ENCODE measurements at regions of chr15 and their contacts with region 1.

Region 1: DNA sequence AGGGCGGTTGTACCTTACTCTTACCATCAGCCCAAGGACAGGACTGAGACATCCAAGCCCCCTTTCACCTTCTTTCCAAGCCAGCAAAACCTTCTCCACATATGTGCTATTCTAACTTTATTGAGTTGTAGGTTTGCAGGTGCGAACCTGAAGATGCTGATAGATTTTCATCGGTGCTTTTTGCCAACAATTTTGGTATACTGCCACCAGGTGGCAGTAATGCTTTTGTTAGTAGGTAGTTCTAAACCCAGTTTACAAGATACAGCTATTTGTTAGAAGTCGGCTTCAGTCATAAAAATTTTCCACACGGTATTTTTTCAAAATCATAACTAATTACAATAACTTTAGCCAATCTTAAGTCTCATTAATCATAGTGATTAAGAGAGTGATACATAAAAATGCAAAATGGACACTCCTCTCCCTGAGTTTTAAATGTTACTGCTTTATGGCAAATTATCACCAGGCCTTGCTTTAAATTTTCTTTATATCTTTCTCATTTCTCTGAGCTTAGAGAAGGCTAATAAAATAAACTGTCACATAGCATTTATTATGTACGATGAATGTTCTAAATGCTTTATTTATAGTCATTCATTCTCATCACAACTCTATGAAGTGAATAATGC is 636 bp downstream of the TBC1D21 start:
- DNase-seq: peak; percentile 17
- H3K4me3 ChIP-seq: no peak overlapping the region
- CTCF ChIP-seq: peak; percentile 23

Region 2: GRCh38 chr15:73851689-73852088 is 22.3 kb before region 1 on chr15:
- CTCF ChIA-PET with region 1: interaction called, 10 read pairs
- POLR2A ChIA-PET with region 1: no interaction called
- DNase-seq: no peak
- H3K4me3 ChIP-seq: no peak overlapping the region
- CTCF ChIP-seq: no peak

Region 3: DNA sequence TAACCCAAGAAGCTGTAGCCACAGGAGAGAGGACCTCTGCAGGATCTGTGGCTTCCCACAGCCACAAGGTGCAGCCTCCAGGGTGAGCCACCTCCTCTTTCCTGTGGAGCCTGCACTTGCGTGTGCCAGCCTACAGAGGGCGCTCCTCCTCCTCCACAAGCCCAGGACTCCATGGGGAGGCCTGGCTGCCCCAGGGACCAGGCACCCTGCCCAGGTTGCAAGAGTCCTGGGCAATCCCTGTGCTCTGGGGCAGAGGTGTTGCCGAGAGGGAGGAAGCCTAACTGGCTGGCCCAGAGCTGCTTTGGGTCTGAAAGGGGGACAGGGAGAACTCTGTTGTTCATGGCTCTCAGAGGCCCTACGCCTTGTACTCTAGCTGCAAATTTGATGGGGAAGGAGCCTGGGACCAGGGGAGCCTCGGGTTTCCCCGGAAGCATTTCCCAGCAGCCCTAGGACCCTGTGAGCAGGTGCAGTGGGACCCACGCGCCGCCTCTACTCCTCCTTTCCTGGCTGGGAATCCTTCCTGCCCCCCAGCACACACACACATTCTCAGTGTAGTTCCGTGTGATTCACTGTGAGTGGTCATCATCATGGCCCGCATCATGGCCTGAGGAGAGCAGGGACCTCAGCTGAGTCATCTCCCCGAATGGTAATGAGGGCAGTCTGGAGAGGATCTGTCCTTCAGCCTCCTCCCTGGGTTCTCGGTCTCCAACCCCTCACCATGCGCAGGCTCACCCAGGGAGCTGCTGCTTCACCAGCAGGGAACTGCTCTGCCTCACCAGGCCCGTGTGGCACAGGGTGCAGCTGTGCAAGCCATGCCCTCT is 23.7 kb after region 1 on chr15:
- CTCF ChIA-PET with region 1: interaction called, 68 read pairs
- POLR2A ChIA-PET with region 1: no interaction called
- DNase-seq: peak; percentile 40
- H3K4me3 ChIP-seq: no peak overlapping the region
- CTCF ChIP-seq: peak; percentile 100

Region 4: DNA sequence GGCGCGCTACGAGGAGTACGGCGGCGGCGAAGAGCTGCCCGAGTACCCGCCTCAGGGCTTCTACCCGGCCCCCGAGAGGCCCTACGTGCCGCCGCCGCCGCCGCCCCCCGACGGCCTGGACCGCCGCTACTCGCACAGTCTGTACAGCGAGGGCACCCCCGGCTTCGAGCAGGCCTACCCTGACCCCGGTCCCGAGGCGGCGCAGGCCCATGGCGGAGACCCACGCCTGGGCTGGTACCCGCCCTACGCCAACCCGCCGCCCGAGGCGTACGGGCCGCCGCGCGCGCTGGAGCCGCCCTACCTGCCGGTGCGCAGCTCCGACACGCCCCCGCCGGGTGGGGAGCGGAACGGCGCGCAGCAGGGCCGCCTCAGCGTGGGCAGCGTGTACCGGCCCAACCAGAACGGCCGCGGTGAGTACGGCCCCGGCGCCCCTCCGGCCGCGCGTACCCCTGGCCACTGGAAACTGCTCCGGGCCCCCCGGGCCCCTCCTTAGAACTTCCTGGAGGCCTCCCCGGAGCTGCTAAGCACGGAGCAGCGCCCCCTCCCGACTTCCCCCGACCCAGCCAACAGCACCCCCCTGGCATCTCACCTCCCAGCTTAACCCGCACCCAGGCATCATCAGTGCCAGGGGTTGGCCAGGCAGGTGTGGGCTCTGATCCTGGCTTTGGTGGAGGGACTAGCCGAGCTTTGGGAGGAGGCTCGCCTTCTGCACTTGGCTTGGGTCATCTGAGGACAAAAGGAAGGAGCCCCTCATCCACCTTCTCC is 53.7 kb after region 1 on chr15:
- CTCF ChIA-PET with region 1: interaction called, 24 read pairs
- POLR2A ChIA-PET with region 1: no interaction called
- DNase-seq: no peak
- H3K4me3 ChIP-seq: peak overlapping the region; percentile 80
- CTCF ChIP-seq: peak; percentile 62

Region 5: DNA sequence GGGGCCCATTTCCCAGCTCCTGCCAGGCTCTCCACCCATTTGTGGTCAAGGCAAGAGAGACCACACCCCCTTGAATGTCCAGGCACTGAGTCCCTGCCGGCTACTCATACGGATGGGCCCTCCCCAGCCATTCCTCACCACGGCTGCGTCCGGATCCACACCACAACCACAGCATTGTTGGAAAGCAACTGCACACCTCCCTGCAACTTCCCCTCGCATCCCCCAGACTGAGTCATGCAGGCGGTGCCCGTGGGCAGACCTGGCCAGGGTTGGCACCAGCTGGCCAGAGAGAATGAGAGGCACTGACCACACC is 82.7 kb after region 1 on chr15:
- CTCF ChIA-PET with region 1: interaction called, 18 read pairs
- POLR2A ChIA-PET with region 1: interaction called, 3 read pairs
- DNase-seq: peak; percentile 63
- H3K4me3 ChIP-seq: no peak overlapping the region
- CTCF ChIP-seq: no peak

Measured in AG04449 (cell line).